ENCODE measurements at regions of chr16 and their contacts with region 1.

Region 1: GRCh38 chr16:85979605-85980004 is 80.6 kb downstream of the IRF8 start:
- DNase-seq: no peak
- H3K4me3 ChIP-seq: peak overlapping the region in 1 of 3 experiments; percentile 6
- H3K4me3 Mint-ChIP-seq: peak overlapping the region in 1 of 2 donors; percentile 1
- H3K27ac ChIP-seq: peak overlapping the region; percentile 90 to 94
- H3K27ac Mint-ChIP-seq: peak overlapping the region in 6 of 7 donors; percentile 58 to 98 (median 96)
- H3K4me1 ChIP-seq: peaks cover 94 to 97% of the 10 kb centered on the region in 2 donors
- H3K4me1 Mint-ChIP-seq: peaks cover 97% of the 10 kb centered on the region
- H3K27me3 ChIP-seq: no peaks in the 10 kb centered on the region
- H3K27me3 Mint-ChIP-seq: peaks cover 0 to 3% (median 0%) of the 10 kb centered on the region in 3 donors
- CTCF ChIP-seq: no peak

Region 2: GRCh38 chr16:85935974-85936760 is 43.4 kb before region 1 on chr16:
- intact Hi-C with region 1: loop called (anchors 5 kb)
- DNase-seq: peak; percentile 76 to 85 (median 80)
- H3K4me3 ChIP-seq: peak overlapping the region in 1 of 3 experiments; percentile 44
- H3K4me3 Mint-ChIP-seq: peak overlapping the region; percentile 57 to 82
- H3K27ac ChIP-seq: peak overlapping the region; percentile 85 to 93
- H3K27ac Mint-ChIP-seq: peak overlapping the region; percentile 95 to 98 (median 97)
- H3K4me1 ChIP-seq: peaks cover 62 to 66% of the 10 kb centered on the region in 2 donors
- H3K4me1 Mint-ChIP-seq: peaks cover 67% of the 10 kb centered on the region
- H3K27me3 ChIP-seq: no peaks in the 10 kb centered on the region
- H3K27me3 Mint-ChIP-seq: peaks cover 0 to 2% (median 0%) of the 10 kb centered on the region in 3 donors
- CTCF ChIP-seq: no peak

Region 3: GRCh38 chr16:86029131-86029741 is 49.6 kb after region 1 on chr16:
- intact Hi-C with region 1: no loop called
- DNase-seq: no peak
- H3K4me3 ChIP-seq: no peak overlapping the region
- H3K4me3 Mint-ChIP-seq: no peak overlapping the region
- H3K27ac ChIP-seq: no peak overlapping the region
- H3K27ac Mint-ChIP-seq: no peak overlapping the region
- H3K4me1 ChIP-seq: no peaks in the 10 kb centered on the region
- H3K4me1 Mint-ChIP-seq: peaks cover 3% of the 10 kb centered on the region
- H3K27me3 ChIP-seq: peaks cover 0 to 8% of the 10 kb centered on the region in 2 donors
- H3K27me3 Mint-ChIP-seq: peaks cover 20 to 38% (median 29%) of the 10 kb centered on the region in 3 donors
- CTCF ChIP-seq: no peak

Region 4: GRCh38 chr16:86281421-86281820 is 301.8 kb after region 1 on chr16:
- intact Hi-C with region 1: no loop called
- DNase-seq: no peak
- H3K4me3 ChIP-seq: no peak overlapping the region
- H3K4me3 Mint-ChIP-seq: no peak overlapping the region
- H3K27ac ChIP-seq: no peak overlapping the region
- H3K27ac Mint-ChIP-seq: no peak overlapping the region
- H3K4me1 ChIP-seq: no peaks in the 10 kb centered on the region
- H3K4me1 Mint-ChIP-seq: no peaks in the 10 kb centered on the region
- H3K27me3 ChIP-seq: peaks cover 12 to 27% of the 10 kb centered on the region in 2 donors
- H3K27me3 Mint-ChIP-seq: peaks cover 34 to 64% (median 38%) of the 10 kb centered on the region in 3 donors
- CTCF ChIP-seq: no peak